Activated CD4-positive, alpha-beta T cell treated with anti-CD3 and anti-CD28 coated beads for 36 hours (primary cell): ENCODE measurements at regions of chr1 and their contacts with region 1.

Region 1: GRCh38 chr1:166007176-166007575 is 159.6 kb downstream of the FAM78B start:
- DNase-seq: no peak
- ATAC-seq: no peak
- H3K4me3 Mint-ChIP-seq: no peak overlapping the region
- H3K27ac Mint-ChIP-seq: no peak overlapping the region
- H3K4me1 Mint-ChIP-seq: no peaks in the 10 kb centered on the region
- H3K27me3 Mint-ChIP-seq: peaks cover 15% of the 10 kb centered on the region

Region 2: GRCh38 chr1:164599162-164599671 is 1408.0 kb before region 1 on chr1:
- CTCF ChIA-PET with region 1: no interaction called
- POLR2A ChIA-PET with region 1: interaction called, 11 read pairs
- intact Hi-C with region 1: no loop called
- DNase-seq: no peak
- ATAC-seq: no peak
- H3K4me3 Mint-ChIP-seq: no peak overlapping the region
- H3K27ac Mint-ChIP-seq: no peak overlapping the region
- H3K4me1 Mint-ChIP-seq: no peaks in the 10 kb centered on the region
- H3K27me3 Mint-ChIP-seq: no peaks in the 10 kb centered on the region

Region 3: DNA sequence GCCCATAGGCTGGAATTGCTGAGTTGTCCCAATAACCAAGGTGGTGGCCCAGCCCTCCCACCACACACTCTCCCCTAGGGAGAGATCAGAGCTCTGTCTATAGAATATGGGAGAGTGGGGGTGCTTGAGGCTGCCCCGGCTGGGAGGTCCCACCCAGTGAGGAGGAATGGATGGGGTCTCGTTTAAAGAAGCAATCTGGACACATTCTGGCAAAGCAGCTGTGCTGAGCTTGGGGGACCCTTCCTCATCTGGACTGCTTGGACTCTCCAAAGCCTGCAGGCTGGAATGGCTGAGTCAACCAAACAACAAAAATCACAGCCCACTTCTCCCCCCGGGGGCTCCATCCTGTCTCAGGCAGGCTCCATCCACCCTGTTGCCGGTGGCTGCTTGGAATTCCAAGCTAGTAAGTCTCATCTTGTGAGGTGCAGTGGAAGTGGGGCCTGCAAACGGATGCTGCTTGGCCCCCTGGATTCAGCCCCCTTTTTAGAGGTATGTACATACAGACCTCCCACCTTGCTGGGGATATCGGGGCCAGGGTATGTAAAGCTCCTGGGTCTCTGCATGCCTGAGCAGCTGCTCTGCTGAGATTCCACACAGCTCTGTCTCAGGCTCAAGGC is 226.7 kb after region 1 on chr1:
- CTCF ChIA-PET with region 1: no interaction called
- POLR2A ChIA-PET with region 1: no interaction called
- intact Hi-C with region 1: no loop called
- DNase-seq: no peak
- ATAC-seq: no peak
- H3K4me3 Mint-ChIP-seq: no peak overlapping the region
- H3K27ac Mint-ChIP-seq: no peak overlapping the region
- H3K4me1 Mint-ChIP-seq: no peaks in the 10 kb centered on the region
- H3K27me3 Mint-ChIP-seq: no peaks in the 10 kb centered on the region